Caco-2 (cell line): ENCODE measurements at regions of chr19 and their contacts with region 1.

Region 1: GRCh38 chr19:1794424-1795172 is 17.5 kb downstream of the ATP8B3 start:
- DNase-seq: no peak
- H3K4me3 ChIP-seq: no peak overlapping the region
- H3K4me3 Mint-ChIP-seq: no peak overlapping the region
- H3K27ac Mint-ChIP-seq: no peak overlapping the region
- H3K4me1 ChIP-seq: no peaks in the 10 kb centered on the region
- H3K4me1 Mint-ChIP-seq: no peaks in the 10 kb centered on the region
- H3K27me3 ChIP-seq: no peaks in the 10 kb centered on the region
- H3K27me3 Mint-ChIP-seq: no peaks in the 10 kb centered on the region
- CTCF ChIP-seq: no peak

Region 2: GRCh38 chr19:1445185-1445931 is 349.2 kb before region 1 on chr19:
- CTCF ChIA-PET with region 1: no interaction called
- POLR2A ChIA-PET with region 1: no interaction called
- intact Hi-C with region 1: no loop called
- DNase-seq: peak in 1 of 2 experiments; percentile 77
- H3K4me3 ChIP-seq: peak overlapping the region; percentile 65
- H3K4me3 Mint-ChIP-seq: peak overlapping the region; percentile 76
- H3K27ac Mint-ChIP-seq: peak overlapping the region; percentile 74
- H3K4me1 ChIP-seq: peaks cover 27% of the 10 kb centered on the region
- H3K4me1 Mint-ChIP-seq: peaks cover 10% of the 10 kb centered on the region
- H3K27me3 ChIP-seq: no peaks in the 10 kb centered on the region
- H3K27me3 Mint-ChIP-seq: no peaks in the 10 kb centered on the region
- CTCF ChIP-seq: peak; percentile 19 to 70

Region 3: DNA sequence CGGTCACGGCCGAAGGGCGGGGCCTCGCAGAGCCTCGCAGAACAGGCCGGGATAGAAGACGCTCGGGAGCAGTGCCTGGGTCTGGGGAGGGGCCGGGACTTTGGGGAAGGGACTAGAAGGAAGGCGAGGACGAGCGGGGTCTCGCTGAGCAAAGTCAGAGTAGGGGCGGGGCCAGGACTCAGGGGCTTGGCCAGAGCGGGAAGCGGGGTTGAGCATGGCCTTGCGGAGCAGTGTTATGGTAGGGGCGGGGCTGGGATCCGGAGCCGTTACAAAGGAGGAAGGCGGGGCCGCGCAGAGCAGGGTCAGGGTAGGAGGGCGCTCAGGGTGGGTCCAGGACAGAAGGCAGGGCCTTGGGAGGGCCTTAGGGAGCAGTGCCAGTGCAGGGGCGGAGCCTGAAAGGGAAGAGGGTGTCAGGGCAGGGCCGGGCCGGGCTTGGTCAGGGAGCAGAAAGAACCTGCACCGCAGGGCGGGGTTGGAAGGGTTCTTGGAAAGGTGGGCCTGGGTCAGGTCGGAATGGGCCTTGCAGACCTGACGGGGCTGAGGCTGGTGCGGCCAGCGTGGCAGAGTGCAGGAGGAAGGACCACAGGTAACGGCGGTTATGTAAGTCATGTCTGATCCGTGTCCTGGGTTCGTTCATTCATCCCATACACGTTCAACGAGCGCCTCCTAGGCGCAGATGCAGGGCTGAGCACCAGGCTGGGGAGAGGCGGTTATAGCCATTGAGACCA is 18.0 kb after region 1 on chr19:
- CTCF ChIA-PET with region 1: interaction called, 5 read pairs
- POLR2A ChIA-PET with region 1: no interaction called
- intact Hi-C with region 1: loop called (anchors 1 kb)
- DNase-seq: peak; percentile 89 to 94
- H3K4me3 ChIP-seq: peak overlapping the region; percentile 47
- H3K4me3 Mint-ChIP-seq: peak overlapping the region; percentile 94
- H3K27ac Mint-ChIP-seq: peak overlapping the region; percentile 55
- H3K4me1 ChIP-seq: no peaks in the 10 kb centered on the region
- H3K4me1 Mint-ChIP-seq: no peaks in the 10 kb centered on the region
- H3K27me3 ChIP-seq: no peaks in the 10 kb centered on the region; the same call in 1 of the 2 replicates
- H3K27me3 Mint-ChIP-seq: no peaks in the 10 kb centered on the region
- CTCF ChIP-seq: peak; percentile 54 to 59